A673 (cell line): ENCODE measurements at regions of chr9 and their contacts with region 1.

Region 1: DNA sequence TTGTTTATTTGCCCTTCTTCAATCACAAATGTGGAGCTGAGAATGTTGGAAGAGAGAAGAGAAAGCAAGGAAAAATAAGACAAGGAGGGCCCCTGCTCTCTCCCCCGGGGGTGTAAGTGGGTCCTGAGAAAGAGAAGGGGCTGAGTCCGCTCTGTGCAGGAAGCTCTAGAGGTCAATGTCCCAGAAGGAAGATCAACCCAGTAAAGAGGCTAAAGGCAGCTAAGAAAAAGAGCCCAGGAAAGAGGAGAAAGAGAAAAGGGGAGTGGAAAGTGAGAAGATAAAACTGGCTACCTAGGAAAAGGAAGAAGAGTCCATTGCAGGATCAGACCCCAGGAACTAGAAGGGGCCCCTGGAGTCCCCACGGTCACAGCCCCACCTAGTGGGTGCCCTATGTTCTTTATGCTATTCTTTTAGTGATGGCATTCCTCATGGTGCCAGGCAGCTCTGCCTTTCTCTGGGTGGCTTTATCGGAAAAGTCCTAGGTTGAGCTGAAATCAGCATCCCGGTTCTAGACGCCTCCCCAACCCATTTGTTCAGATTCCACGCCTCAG is 583.4 kb downstream of the ACTL7B start:
- DNase-seq: peak; percentile 41
- H3K4me3 ChIP-seq: peak overlapping the region; percentile 39
- H3K27ac ChIP-seq: no peak overlapping the region
- H3K4me1 ChIP-seq: peaks cover 5% of the 10 kb centered on the region
- H3K27me3 ChIP-seq: no peaks in the 10 kb centered on the region
- CTCF ChIP-seq: peak; percentile 58

Region 2: DNA sequence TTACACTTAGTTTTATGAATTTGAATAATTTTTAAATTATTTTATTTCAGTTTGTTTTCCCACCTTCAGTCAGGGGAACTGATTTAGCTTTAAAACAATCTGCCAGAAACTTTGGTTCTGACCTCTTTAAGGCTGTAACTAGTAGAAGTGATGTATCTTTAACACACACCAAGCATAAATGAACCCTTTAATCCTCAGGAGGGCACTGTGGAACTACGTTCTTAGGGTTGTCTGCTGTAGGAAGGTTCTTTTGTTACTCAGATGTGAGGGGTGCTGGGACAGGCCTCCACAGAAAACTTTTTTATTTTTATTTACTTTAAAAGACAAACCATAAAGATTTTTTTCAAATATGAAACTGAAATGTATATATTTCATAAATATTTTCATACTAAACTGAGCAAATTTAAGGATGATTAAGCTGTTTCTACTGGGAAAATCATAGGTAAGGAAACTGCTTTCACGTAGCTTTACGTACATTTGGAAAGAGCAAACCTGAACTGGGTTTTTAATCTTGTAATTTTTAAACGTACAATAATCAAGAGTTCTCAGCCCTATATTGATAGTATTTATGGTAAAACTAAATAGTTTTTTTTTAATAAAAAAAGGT is 788.2 kb before region 1 on chr9:
- CTCF ChIA-PET with region 1: no interaction called
- POLR2A ChIA-PET with region 1: no interaction called
- intact Hi-C with region 1: loop called (anchors 1 kb)
- DNase-seq: peak; percentile 67
- H3K4me3 ChIP-seq: no peak overlapping the region
- H3K27ac ChIP-seq: no peak overlapping the region
- H3K4me1 ChIP-seq: peaks cover 13% of the 10 kb centered on the region
- H3K27me3 ChIP-seq: peaks cover 29% of the 10 kb centered on the region
- CTCF ChIP-seq: peak; percentile 59

Region 3: DNA sequence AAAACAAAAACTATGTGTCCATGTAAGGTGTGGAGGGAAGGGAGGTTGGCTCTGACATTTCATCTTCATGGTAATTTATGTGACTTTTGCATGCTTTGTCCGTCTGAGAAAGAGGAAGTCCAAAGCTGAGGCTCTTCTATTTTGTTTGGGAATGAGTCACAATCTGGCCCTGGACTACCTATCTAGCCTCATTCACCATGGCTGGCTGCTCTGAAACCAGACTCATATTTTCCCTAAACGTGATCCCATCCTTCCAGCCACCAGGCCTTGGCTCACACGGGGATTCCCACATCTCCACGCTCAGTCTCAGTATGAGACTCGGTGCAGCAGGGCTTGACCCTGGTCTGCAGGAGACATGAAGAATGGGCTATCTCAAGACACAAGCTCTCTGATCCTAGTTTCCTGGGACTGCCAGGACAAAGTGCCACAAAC is 89.5 kb before region 1 on chr9:
- CTCF ChIA-PET with region 1: no interaction called
- POLR2A ChIA-PET with region 1: no interaction called
- intact Hi-C with region 1: no loop called
- DNase-seq: no peak
- H3K4me3 ChIP-seq: no peak overlapping the region
- H3K27ac ChIP-seq: no peak overlapping the region
- H3K4me1 ChIP-seq: no peaks in the 10 kb centered on the region
- H3K27me3 ChIP-seq: no peaks in the 10 kb centered on the region
- CTCF ChIP-seq: no peak